Lower leg skin (tissue), 4 donors: ENCODE measurements at regions of chr16 and their contacts with region 1.

Region 1: GRCh38 chr16:58345574-58346354 is 46.5 kb upstream of the GINS3 start:
- DNase-seq: no peak
- H3K4me3 ChIP-seq: no peak overlapping the region
- CTCF ChIP-seq: no peak
- POLR2A ChIP-seq: no peak

Region 2: DNA sequence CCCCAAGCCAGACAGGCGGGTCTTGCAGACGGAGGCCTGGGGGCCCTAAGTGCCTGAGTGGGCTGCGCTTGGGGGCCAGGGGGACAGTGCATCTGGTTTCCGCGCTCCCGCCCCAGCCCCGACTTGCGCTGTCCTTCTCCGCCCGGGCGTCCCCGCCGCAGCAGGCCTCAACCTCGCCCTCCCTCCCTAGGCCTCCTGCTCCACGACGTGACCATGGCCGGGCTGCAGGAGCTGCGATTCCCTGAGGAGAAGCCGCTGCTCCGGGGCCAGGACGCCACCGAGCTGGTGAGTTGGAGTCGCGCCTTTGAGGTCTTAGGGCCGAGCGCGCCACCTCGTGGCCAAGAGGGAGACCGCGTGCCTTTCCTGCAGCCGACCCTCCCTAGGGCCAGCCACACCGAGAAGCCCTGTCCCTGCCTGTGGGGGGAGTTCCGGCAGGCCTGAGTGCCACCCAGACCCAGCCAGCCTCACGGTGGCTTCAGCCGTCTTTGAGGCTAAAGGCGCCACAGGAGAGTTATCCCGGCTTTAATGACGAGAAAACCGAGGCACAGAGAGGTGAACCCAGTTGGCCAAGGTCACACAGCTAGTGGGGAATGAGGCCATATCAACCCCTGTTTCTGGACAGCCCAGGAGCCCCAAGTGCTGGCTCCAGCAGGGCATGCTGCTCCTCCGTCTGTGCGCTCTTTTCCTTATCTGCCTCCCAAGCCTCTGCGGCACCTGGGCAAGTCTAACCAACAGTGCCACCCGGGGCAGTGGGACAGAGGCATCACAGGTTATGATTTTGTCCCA is 142.0 kb after region 1 on chr16:
- intact Hi-C with region 1: loop called (anchors 5 kb)
- DNase-seq: peak; percentile 63 to 95
- H3K4me3 ChIP-seq: no peak overlapping the region
- CTCF ChIP-seq: peak in 1 of 3 donors; percentile 74
- POLR2A ChIP-seq: no peak